ENCODE measurements at regions of chr6 and their contacts with region 1.

Region 1: DNA sequence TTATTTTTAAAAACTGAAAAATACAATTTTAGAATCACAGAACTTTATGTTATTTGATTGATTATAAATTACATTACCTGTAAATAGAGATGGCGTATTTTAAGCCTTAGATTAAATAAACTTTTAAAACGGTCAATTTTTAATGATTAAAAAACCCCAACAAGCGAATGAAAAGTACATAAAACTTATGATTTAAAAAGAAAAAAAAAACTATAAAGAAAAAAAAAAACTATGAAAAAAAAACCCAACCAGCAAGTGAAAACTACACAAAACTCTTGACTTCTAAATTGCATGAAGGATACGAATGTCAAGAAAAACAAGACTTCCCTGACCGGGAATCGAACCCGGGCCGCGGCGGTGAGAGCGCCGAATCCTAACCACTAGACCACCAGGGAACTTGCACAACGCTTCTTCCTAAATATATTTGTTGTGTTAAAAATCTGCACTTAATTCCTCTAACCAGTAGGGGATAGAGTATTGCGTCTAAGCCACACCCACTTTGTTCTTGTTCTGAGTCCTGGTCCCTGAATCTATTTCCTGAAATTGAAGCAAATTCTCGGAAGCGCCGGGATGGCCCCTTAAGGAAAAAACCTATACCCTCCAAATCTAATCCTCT is 10.7 kb upstream of the NCOA7 start:
- DNase-seq: peak; percentile 87 to 94 (median 92)
- H3K4me3 ChIP-seq: peak overlapping the region; percentile 69 to 92
- H3K4me3 Mint-ChIP-seq: no peak overlapping the region
- H3K27ac ChIP-seq: peak overlapping the region; percentile 72
- H3K27ac Mint-ChIP-seq: no peak overlapping the region
- H3K4me1 ChIP-seq: peaks cover 17% of the 10 kb centered on the region
- H3K4me1 Mint-ChIP-seq: peaks cover 10 to 13% (median 12%) of the 10 kb centered on the region in 4 donors
- H3K27me3 ChIP-seq: no peaks in the 10 kb centered on the region
- H3K27me3 Mint-ChIP-seq: no peaks in the 10 kb centered on the region

Region 2: GRCh38 chr6:125749173-125749864 is 30.7 kb before region 1 on chr6 and contains the start of gene HEY2:
- CTCF ChIA-PET with region 1: interaction called, 8 read pairs
- POLR2A ChIA-PET with region 1: interaction called, 17 read pairs
- intact Hi-C with region 1: loop called (anchors 1 kb)
- DNase-seq: peak; percentile 69 to 79 (median 75)
- H3K4me3 ChIP-seq: peak within 1 kb of the TSS; percentile 30 to 56
- H3K4me3 Mint-ChIP-seq: peak within 1 kb of the TSS; percentile 88 to 95 (median 91)
- H3K27ac ChIP-seq: no peak within 1 kb of the TSS
- H3K27ac Mint-ChIP-seq: peak within 1 kb of the TSS; percentile 57 to 92 (median 80)
- H3K4me1 ChIP-seq: peaks cover 41% of the 10 kb centered on the region
- H3K4me1 Mint-ChIP-seq: peaks cover 21 to 43% (median 27%) of the 10 kb centered on the region in 4 donors
- H3K27me3 ChIP-seq: peaks cover 57% of the 10 kb centered on the region
- H3K27me3 Mint-ChIP-seq: peaks cover 41 to 42% of the 10 kb centered on the region in 2 donors
- total RNA-seq, gene HEY2: 0.14 TPM in 1 of 2 experiments, not detected in the other

Region 3: GRCh38 chr6:125810445-125810844 is 30.4 kb after region 1 on chr6:
- CTCF ChIA-PET with region 1: no interaction called
- POLR2A ChIA-PET with region 1: no interaction called
- intact Hi-C with region 1: no loop called
- DNase-seq: no peak
- H3K4me3 ChIP-seq: no peak overlapping the region
- H3K4me3 Mint-ChIP-seq: no peak overlapping the region
- H3K27ac ChIP-seq: no peak overlapping the region
- H3K27ac Mint-ChIP-seq: no peak overlapping the region
- H3K4me1 ChIP-seq: peaks cover 69% of the 10 kb centered on the region
- H3K4me1 Mint-ChIP-seq: peaks cover 51 to 83% (median 74%) of the 10 kb centered on the region in 4 donors
- H3K27me3 ChIP-seq: no peaks in the 10 kb centered on the region
- H3K27me3 Mint-ChIP-seq: no peaks in the 10 kb centered on the region

Region 4: DNA sequence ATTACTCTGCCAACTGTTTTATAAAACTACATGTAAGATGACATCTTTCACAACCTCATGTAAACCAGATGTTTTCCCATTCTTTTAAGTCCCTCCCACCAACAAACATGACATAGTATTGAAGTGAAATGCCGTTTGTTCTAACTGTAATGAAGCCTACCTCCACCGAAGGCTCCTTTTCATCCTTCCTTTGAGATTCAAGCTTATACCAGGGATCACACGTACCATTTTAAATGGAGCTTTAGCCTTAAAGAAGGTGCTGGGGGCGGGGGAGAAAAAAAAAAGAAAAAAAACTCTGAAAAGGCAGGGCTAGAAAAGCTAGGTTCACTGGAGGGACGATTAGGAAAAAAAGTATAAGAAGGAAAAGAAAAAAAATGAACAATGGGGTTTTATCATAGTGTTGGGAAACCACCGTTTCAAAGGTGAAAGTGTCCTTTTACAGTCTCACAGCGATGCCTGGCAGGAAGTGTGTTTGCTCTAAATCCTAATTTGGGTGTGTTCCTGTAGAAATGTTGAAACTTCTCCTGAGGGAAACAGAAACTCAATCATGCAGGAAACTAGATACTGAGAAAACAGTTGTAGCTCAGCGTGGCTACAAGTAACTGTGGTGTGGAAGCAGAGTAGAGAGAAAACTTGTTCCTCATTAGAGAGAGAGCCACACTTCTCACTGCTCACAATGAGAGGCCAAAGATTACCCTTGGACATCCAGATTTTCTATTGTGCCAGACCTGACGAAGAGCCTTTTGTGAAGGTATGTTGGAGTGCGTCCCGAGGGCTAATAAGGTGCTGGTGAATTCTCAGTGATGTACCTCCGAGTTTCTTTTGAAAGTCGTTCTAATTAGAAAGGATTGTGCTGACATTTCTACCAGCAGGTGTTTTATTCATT is 138.9 kb after region 1 on chr6:
- CTCF ChIA-PET with region 1: interaction called, 10 read pairs
- POLR2A ChIA-PET with region 1: interaction called, 11 read pairs
- intact Hi-C with region 1: no loop called
- DNase-seq: peak; percentile 63 to 80 (median 70)
- H3K4me3 ChIP-seq: peak overlapping the region in 1 of 2 donors; percentile 37
- H3K4me3 Mint-ChIP-seq: peak overlapping the region; percentile 51 to 87 (median 79)
- H3K27ac ChIP-seq: peak overlapping the region; percentile 73
- H3K27ac Mint-ChIP-seq: peak overlapping the region; percentile 83 to 97 (median 95)
- H3K4me1 ChIP-seq: peaks cover 23% of the 10 kb centered on the region
- H3K4me1 Mint-ChIP-seq: peaks cover 23 to 28% (median 27%) of the 10 kb centered on the region in 4 donors
- H3K27me3 ChIP-seq: no peaks in the 10 kb centered on the region
- H3K27me3 Mint-ChIP-seq: no peaks in the 10 kb centered on the region

Region 5: DNA sequence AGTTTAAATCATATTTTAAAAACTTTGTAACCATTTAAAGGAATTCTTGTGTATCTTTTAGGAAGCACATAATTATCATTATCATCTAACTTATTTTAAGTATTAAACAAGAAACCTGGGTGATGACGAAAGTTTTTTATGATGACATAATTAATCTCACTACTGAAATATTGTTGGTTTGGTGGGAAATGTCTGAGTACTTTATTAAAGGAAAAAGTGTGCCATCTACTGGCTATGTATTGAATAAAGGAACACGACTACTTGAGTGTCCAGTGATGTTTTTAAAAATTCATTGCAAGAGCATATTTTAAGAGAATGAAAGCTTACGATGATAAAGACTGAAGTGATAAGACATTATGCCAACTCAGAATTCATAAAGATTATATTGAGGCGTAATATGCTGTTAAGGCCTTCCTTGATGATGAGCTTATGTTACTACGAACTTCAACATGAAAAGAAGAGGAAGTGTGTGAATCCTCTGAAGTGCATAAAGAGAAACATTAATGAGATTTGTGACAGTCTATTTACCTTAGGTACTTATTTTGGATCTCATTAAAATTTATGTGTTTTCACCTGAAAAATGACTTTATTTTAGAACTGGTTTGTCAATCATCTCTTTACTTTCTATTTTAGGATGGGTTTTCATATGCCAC is 194.3 kb after region 1 on chr6:
- CTCF ChIA-PET with region 1: interaction called, 21 read pairs
- POLR2A ChIA-PET with region 1: interaction called, 5 read pairs
- intact Hi-C with region 1: loop called (anchors 1 kb)
- DNase-seq: peak in 4 of 5 donors; percentile 43 to 53 (median 46)
- H3K4me3 ChIP-seq: no peak overlapping the region
- H3K4me3 Mint-ChIP-seq: no peak overlapping the region
- H3K27ac ChIP-seq: no peak overlapping the region
- H3K27ac Mint-ChIP-seq: peak overlapping the region in 3 of 7 donors; percentile 14 to 33 (median 23)
- H3K4me1 ChIP-seq: no peaks in the 10 kb centered on the region
- H3K4me1 Mint-ChIP-seq: peaks cover 0 to 10% (median 9%) of the 10 kb centered on the region in 4 donors
- H3K27me3 ChIP-seq: no peaks in the 10 kb centered on the region
- H3K27me3 Mint-ChIP-seq: no peaks in the 10 kb centered on the region

Region 6: GRCh38 chr6:126339796-126340609 is 560.0 kb after region 1 on chr6 and contains the start of gene CENPW:
- CTCF ChIA-PET with region 1: no interaction called
- POLR2A ChIA-PET with region 1: no interaction called
- intact Hi-C with region 1: loop called (anchors 2 kb)
- DNase-seq: peak; percentile 83 to 91 (median 87)
- H3K4me3 ChIP-seq: peak within 1 kb of the TSS; percentile 26 to 92
- H3K4me3 Mint-ChIP-seq: no peak within 1 kb of the TSS
- H3K27ac ChIP-seq: peak within 1 kb of the TSS; percentile 32
- H3K27ac Mint-ChIP-seq: peak within 1 kb of the TSS in 4 of 7 donors; percentile 5 to 79 (median 35)
- H3K4me1 ChIP-seq: peaks cover 9% of the 10 kb centered on the region
- H3K4me1 Mint-ChIP-seq: peaks cover 0 to 11% (median 3%) of the 10 kb centered on the region in 4 donors
- H3K27me3 ChIP-seq: no peaks in the 10 kb centered on the region
- H3K27me3 Mint-ChIP-seq: no peaks in the 10 kb centered on the region
- total RNA-seq, gene CENPW: 1.4 to 1.5 TPM